Activated CD4-positive, alpha-beta memory T cell treated with anti-CD3 and anti-CD28 coated beads, Interleukin-2, amount 10 ng/mL, durations not matched to agents 7 days and 5 days (primary cell): ENCODE measurements at regions of chr13 and their contacts with region 1.

Region 1: DNA sequence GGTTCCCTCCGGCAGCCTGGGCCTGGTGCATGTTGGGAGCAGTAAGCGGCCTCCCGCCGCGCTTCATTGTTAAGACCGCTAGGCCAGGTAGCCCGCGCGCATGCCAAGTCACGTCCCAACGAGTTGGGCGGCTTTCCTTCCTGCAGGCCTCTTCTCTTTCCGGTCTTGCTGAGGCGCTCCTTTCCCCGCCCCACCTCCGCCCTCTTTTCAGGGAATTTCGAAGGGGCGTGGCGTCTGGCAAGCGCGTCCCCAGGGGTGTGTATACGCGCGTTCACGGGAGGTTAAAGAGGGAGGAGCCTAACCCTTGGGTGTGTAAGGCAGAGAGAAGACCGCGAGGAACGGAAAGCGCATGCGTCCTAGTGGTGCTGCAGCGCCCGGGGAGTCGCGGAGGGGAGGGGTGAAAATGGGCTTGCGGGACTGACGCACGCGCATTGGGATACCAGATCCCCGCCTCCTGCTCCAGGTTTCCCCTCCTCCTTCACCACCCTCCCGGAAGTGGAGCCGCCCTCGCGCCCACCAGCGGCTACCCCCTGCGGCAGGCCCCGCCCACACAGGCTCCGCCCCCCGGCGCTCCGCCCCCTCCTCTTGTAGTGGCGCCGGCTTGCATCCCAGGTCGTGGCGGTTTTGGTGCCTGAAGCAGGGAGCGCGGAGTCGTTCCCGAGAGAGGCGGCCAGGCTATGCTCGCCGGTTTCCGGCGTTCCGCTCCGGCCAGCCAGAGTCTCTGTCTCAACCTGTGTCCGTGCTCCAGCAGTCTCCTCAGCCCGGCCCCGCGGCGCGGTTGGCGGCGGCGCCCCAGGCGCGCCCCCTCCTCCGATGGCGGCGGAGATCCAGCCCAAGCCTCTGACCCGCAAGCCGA is at the start of gene WDFY2:
- DNase-seq: peak; percentile 99
- H3K4me3 Mint-ChIP-seq: peak within 1 kb of the TSS; percentile 86
- H3K27ac Mint-ChIP-seq: peak within 1 kb of the TSS; percentile 93
- H3K4me1 Mint-ChIP-seq: peaks cover 44% of the 10 kb centered on the region
- H3K27me3 Mint-ChIP-seq: peaks cover 7% of the 10 kb centered on the region
- total RNA-seq, gene WDFY2: 12.2 to 14.1 TPM

Region 2: DNA sequence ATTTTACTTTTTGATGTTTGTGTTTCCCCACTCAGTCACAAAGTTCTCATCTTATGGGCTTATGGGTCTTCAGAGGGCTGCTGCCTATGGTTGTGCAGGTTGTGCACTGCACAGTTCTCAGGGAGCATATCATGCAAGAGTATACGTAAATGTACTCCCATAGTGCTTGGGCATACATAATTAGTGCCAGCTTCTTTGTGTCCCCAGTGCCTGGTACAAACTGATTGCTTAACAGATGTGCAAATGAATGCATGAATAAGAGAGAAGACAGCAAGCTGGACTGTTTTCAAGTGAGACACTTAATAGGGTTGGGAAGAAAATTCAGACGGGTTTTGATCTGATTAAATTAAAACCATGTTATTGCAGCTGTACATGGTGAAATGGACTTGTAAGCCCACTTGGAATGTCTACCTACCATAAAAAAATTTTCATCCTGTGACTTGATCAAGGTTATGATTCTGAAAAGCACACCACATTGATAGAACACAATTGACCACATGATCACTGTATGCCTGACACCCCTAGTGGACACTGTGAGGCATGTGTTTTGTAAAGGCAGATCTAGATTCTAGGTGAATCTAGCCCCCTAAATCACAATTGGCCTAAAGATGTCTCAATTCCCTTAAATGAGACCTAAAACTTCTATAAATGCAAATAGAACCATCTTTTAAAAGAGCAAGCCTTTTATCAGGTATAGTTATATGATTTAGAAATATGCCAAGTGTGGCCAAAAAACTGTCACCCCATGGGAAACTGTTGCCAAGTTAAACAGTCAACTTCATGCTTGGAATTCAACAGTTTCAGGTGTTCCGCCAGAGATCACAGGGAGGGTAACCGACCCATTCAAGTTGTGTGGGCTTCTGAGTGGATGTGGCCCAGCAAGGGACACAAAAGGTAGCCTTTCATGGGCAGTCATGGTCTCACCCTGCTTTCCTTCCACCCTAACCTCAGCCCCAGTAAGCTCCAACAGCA is 334.0 kb before region 1 on chr13:
- CTCF ChIA-PET with region 1: no interaction called
- POLR2A ChIA-PET with region 1: no interaction called
- DNase-seq: no peak
- H3K4me3 Mint-ChIP-seq: no peak overlapping the region
- H3K27ac Mint-ChIP-seq: no peak overlapping the region
- H3K4me1 Mint-ChIP-seq: no peaks in the 10 kb centered on the region
- H3K27me3 Mint-ChIP-seq: peaks cover 12% of the 10 kb centered on the region

Region 3: GRCh38 chr13:51614350-51614786 is 30.3 kb after region 1 on chr13:
- CTCF ChIA-PET with region 1: interaction called, 4 read pairs
- POLR2A ChIA-PET with region 1: interaction called, 17 read pairs
- DNase-seq: peak; percentile 62
- H3K4me3 Mint-ChIP-seq: peak overlapping the region; percentile 71
- H3K27ac Mint-ChIP-seq: peak overlapping the region; percentile 90
- H3K4me1 Mint-ChIP-seq: peaks cover 20% of the 10 kb centered on the region
- H3K27me3 Mint-ChIP-seq: no peaks in the 10 kb centered on the region